Activated T-helper 1 cell treated with anti-CD3 and anti-CD28 coated beads, Interleukin-12 subunit alpha, Interleukin-12 subunit beta, Interleukin-2, Interleukin-4 antibody, amounts not matched to agents 30 ng/mL and 10 ng/mL and 1 ng/mL, durations not matched to agents 14 hours and 24 hours and 36 hours (primary cell): ENCODE measurements at regions of chr7 and their contacts with region 1.

Region 1: GRCh38 chr7:155205368-155206317 is 92.0 kb upstream of the INSIG1 start:
- DNase-seq: peak; percentile 86
- H3K4me3 Mint-ChIP-seq: peak overlapping the region; percentile 84
- H3K27ac Mint-ChIP-seq: peak overlapping the region; percentile 99
- H3K4me1 Mint-ChIP-seq: peaks cover 31% of the 10 kb centered on the region
- H3K27me3 Mint-ChIP-seq: no peaks in the 10 kb centered on the region

Region 2: GRCh38 chr7:155069992-155070751 is 135.5 kb before region 1 on chr7 and contains the start of gene HTR5A:
- intact Hi-C with region 1: loop called (anchors 1 kb)
- DNase-seq: peak; percentile 75
- H3K4me3 Mint-ChIP-seq: no peak within 1 kb of the TSS
- H3K27ac Mint-ChIP-seq: no peak within 1 kb of the TSS
- H3K4me1 Mint-ChIP-seq: no peaks in the 10 kb centered on the region
- H3K27me3 Mint-ChIP-seq: peaks cover 14% of the 10 kb centered on the region
- total RNA-seq, gene HTR5A: not detected in 2 replicates

Region 3: GRCh38 chr7:155182406-155182970 is 23.2 kb before region 1 on chr7:
- intact Hi-C with region 1: no loop called
- DNase-seq: no peak
- H3K4me3 Mint-ChIP-seq: no peak overlapping the region
- H3K27ac Mint-ChIP-seq: no peak overlapping the region
- H3K4me1 Mint-ChIP-seq: no peaks in the 10 kb centered on the region
- H3K27me3 Mint-ChIP-seq: peaks cover 6% of the 10 kb centered on the region

Region 4: DNA sequence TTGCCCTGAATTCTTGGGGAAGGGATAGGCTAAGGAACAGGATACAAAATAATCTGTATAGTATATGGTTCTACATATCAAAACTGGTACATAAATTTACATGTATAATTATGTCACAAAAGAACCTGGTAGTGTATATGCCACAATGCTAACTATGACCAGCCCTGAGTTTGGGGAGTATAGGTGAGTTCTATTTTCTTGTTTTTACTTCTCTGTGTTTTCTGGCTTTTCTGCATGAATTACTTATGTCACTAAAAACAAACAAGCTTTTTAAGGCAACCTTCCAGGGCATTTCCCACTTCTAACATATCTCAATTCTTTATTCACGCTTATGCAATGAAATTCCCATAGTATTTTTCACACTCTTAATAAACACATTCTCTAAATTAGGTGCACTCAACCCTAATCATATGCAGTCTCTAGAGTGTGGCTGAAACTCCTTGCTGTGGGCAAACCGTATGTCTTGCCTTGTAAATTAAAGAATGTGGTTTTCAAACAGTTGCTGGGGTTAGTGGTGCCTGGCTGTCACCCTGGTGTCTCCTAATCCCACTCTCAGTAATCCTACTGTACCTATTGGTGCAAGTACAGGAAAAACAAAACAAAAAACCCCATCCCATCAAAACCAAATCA is 78.0 kb after region 1 on chr7:
- intact Hi-C with region 1: loop called (anchors 1 kb)
- DNase-seq: no peak
- H3K4me3 Mint-ChIP-seq: no peak overlapping the region
- H3K27ac Mint-ChIP-seq: no peak overlapping the region
- H3K4me1 Mint-ChIP-seq: peaks cover 79% of the 10 kb centered on the region
- H3K27me3 Mint-ChIP-seq: peaks cover 4% of the 10 kb centered on the region

Region 5: DNA sequence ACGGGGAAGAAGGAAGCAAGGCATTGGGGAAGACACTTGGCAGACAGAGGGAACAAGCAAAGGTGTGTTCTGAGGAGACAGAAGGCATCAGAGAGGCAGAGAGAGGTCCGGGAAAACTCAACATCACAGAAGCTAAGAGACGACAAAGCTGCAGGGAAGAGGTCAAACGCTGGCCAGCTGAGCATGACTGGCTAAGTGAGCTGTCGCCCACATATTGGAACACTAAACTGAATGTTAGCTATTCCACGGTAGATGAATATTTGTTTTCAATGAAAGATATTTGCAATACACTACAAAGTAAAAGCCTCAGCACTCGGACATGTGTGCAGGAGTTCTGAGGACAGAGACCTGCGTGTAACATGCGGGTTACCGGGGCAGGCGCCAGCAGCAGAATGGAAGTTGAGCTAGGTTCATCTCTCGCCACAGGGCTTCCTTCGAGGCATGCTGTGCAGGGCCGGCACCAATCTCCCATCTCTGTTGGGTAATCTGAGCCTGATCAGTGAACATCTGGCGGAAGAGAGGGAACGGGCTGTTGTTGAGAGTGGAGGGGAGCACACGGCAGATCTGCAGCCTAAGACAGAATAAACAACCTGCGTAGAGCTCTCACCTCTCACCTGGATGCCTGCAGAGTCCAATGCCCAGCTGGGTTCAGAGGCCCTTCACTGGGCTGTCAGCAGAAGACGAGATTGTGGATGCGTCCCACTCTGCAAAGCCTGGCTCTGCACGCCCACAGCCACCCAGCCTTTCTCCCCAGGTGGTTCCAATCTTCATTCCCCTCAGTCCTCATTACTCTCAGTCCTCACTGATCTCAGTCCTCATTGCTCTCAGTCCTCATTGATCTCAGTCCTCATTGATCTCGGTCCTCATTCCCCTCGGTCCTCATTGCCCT is 127.9 kb after region 1 on chr7:
- intact Hi-C with region 1: no loop called
- DNase-seq: no peak
- H3K4me3 Mint-ChIP-seq: no peak overlapping the region
- H3K27ac Mint-ChIP-seq: no peak overlapping the region
- H3K4me1 Mint-ChIP-seq: no peaks in the 10 kb centered on the region
- H3K27me3 Mint-ChIP-seq: peaks cover 7% of the 10 kb centered on the region

Region 6: DNA sequence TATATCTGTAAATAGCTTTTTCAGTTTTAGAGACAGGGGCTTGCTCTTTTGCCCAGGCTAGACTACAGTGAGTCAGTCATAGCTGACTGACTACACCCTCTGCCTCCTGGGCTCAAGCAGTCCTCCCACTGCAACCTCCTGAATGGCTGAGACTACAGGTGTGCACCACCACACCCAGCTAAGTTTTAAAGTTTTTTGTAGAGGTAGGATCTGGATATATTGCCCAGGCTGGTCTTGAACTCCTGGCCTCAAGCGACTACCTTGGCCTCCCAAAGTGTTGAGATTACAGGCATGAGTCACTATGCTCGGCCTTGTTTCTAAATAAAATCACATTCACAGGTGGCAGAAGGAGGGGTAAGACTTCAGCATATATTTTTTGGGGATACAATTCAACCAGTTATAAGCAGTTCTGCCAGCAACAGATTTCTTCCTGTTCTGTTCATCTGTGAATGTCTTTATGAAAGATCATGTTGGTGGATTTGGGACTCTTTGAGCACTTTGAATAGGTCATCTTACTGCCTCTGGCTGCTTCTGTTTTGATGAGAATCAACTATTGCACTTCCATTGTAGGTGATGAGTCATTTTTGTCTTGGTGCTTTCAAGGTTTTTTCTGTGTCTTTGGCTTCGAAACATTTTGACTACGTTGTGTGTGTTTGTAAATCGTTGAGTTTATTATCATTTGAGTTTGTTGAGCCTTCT is 454.6 kb after region 1 on chr7:
- intact Hi-C with region 1: loop called (anchors 5 kb)
- DNase-seq: no peak
- H3K4me3 Mint-ChIP-seq: no peak overlapping the region
- H3K27ac Mint-ChIP-seq: peak overlapping the region; percentile 87
- H3K4me1 Mint-ChIP-seq: peaks cover 48% of the 10 kb centered on the region
- H3K27me3 Mint-ChIP-seq: no peaks in the 10 kb centered on the region

Region 7: GRCh38 chr7:156751319-156751718 is 1545.7 kb after region 1 on chr7:
- intact Hi-C with region 1: loop called (anchors 5 kb)
- DNase-seq: peak; percentile 44
- H3K4me3 Mint-ChIP-seq: peak overlapping the region; percentile 16
- H3K27ac Mint-ChIP-seq: no peak overlapping the region
- H3K4me1 Mint-ChIP-seq: peaks cover 16% of the 10 kb centered on the region
- H3K27me3 Mint-ChIP-seq: no peaks in the 10 kb centered on the region